Panc1 (cell line): ENCODE measurements at regions of chr3 and their contacts with region 1.

Region 1: GRCh38 chr3:186714922-186715321 is 2.2 kb upstream of the KNG1 start:
- DNase-seq: no peak
- ATAC-seq: no peak
- H3K4me3 ChIP-seq: no peak overlapping the region
- H3K27ac ChIP-seq: no peak overlapping the region
- H3K4me1 ChIP-seq: no peaks in the 10 kb centered on the region
- H3K27me3 ChIP-seq: no peaks in the 10 kb centered on the region
- CTCF ChIP-seq: no peak

Region 2: DNA sequence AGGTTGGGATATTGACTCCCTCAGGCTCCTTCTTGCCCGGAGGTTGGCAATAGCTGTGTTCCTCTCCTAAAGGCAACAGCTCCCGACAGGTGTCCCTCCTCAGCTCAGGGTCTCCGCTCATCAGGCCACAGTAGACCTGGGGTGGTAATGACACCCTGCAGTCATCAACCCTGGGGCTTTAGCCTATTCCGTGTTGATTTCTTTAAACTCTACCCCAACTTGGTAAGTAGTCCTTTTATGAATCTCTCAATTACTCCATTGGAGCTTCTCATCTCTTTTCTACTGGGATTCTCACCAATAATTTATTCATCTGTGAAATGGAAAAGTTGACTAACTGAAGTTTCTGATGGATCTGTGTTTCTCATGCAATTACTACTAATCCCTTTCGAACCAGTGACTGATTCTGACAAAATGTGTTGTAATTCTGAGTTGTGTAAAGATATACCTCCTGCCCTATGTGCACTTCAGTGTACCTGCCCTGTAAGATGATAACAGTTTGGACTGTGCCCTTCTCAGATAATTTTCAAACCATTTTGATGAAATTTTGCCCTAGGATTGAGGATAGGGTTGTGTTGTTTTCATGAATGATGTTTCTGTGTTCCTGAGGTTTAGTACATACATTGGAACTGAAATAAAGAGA is 334.7 kb after region 1 on chr3:
- CTCF ChIA-PET with region 1: no interaction called
- POLR2A ChIA-PET with region 1: interaction called, 10 read pairs
- in situ Hi-C with region 1: no loop called
- intact Hi-C with region 1: no loop called
- DNase-seq: no peak
- ATAC-seq: no peak
- H3K4me3 ChIP-seq: no peak overlapping the region
- H3K27ac ChIP-seq: no peak overlapping the region
- H3K4me1 ChIP-seq: no peaks in the 10 kb centered on the region
- H3K27me3 ChIP-seq: no peaks in the 10 kb centered on the region
- CTCF ChIP-seq: no peak

Region 3: GRCh38 chr3:187586226-187586625 is 871.3 kb after region 1 on chr3:
- CTCF ChIA-PET with region 1: no interaction called
- POLR2A ChIA-PET with region 1: no interaction called
- in situ Hi-C with region 1: no loop called
- intact Hi-C with region 1: no loop called
- DNase-seq: no peak
- ATAC-seq: no peak
- H3K4me3 ChIP-seq: no peak overlapping the region
- H3K27ac ChIP-seq: no peak overlapping the region
- H3K4me1 ChIP-seq: no peaks in the 10 kb centered on the region; the same call in 1 of the 2 replicates
- H3K27me3 ChIP-seq: no peaks in the 10 kb centered on the region
- CTCF ChIP-seq: no peak